ENCODE measurements at regions of chrX and their contacts with region 1.

Region 1: DNA sequence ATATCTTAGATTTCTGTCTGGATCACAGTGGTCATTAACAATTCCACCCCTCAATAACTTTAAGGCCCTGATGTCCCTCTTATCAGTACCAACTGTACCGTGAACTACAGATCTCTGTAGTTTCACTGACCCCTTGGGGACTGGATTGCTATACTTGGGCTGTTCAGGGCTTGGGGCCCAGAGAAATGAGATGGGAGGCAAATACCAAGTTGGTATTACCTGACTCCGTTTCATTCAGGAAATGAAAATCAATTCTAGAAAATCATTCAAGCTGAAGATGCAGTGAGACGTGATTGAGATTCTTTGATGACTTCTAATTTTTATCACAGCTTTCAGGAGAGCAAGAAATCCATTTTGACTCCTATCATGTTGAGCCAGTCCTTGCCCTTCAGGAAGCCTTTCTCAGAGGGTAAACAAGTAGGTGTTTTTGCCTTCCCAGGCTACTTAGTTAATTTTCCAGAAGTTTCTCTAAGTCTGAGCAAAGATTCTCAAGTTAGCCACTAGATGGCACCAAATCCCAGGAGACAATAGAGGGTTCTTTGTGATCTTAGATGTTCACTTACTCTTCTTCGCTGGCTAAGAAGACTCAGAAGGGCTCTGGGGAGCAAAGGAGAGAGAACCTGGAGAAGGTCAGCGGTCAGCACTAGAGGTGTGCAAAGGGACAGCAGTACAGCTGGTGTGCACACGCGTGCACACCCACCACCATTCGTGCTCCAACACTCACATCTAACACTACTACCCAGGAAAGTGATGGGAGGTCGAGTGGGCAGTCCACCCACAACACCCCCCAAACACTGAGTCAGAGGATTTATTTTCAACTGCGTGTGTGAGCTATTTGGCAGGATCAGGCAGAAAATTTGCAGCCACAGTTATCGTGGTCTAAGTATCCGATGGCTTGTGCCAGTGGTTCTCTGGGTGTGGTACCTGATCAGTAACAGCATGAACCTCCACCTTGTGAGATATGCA is 7.4 kb downstream of the HNRNPH2 start:
- DNase-seq: peak in 8 of 9 donors; percentile 23 to 70 (median 62)
- ATAC-seq: peak; percentile 83
- H3K4me3 ChIP-seq: no peak overlapping the region
- H3K4me3 Mint-ChIP-seq: peak overlapping the region; percentile 5 to 59 (median 41)
- H3K27ac ChIP-seq: peak overlapping the region; percentile 66
- H3K27ac Mint-ChIP-seq: peak overlapping the region; percentile 72 to 97 (median 88)
- H3K4me1 ChIP-seq: peaks cover 3 to 8% of the 10 kb centered on the region in 2 donors
- H3K4me1 Mint-ChIP-seq: peaks cover 16 to 59% (median 50%) of the 10 kb centered on the region in 7 donors
- H3K27me3 ChIP-seq: no peaks in the 10 kb centered on the region
- H3K27me3 Mint-ChIP-seq: no peaks in the 10 kb centered on the region

Region 2: DNA sequence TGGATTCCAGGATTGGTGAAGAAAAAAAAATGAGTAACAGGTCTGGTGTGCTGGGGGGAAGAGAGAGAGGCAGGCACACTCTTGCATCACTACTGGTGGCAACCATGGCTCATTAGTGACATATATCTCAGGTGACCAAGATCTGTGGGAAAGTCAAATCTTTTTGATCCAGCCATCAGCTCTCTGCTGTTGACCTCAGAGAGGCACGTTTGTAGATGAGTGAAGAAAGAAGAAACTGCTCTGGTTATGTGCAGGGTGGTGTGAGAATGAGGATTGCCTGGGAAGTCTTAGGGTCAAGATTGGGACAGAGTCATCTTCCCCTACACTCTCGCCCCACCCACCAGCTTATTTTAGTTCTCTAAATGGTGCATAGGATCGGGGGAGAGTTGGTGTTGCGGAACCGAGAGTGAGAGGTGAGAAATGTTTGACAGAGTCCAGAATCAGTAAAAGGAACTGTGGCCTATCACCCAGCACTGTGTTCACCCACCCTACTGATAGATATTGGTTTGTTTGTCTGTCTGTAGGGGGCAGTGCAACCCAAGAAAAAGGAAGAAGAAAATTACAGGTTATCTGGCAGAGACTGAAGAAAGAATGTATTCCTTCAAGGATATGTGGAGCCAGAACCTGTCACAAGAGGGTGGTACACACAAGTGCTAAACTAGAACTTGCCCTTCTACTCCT is 180.4 kb after region 1 on chrX:
- CTCF ChIA-PET with region 1: interaction called, 3 read pairs
- POLR2A ChIA-PET with region 1: no interaction called
- intact Hi-C with region 1: loop called (anchors 5 kb)
- DNase-seq: peak in 7 of 9 donors; percentile 32 to 70 (median 54)
- ATAC-seq: peak; percentile 86
- H3K4me3 ChIP-seq: no peak overlapping the region
- H3K4me3 Mint-ChIP-seq: no peak overlapping the region
- H3K27ac ChIP-seq: no peak overlapping the region
- H3K27ac Mint-ChIP-seq: no peak overlapping the region
- H3K4me1 ChIP-seq: no peaks in the 10 kb centered on the region
- H3K4me1 Mint-ChIP-seq: no peaks in the 10 kb centered on the region
- H3K27me3 ChIP-seq: no peaks in the 10 kb centered on the region
- H3K27me3 Mint-ChIP-seq: peaks cover 7 to 22% (median 12%) of the 10 kb centered on the region in 5 donors

Region 3: GRCh38 chrX:101759000-101759399 is 343.5 kb after region 1 on chrX:
- CTCF ChIA-PET with region 1: interaction called, 11 read pairs
- POLR2A ChIA-PET with region 1: no interaction called
- intact Hi-C with region 1: loop called (anchors 1 kb)
- DNase-seq: peak in 7 of 9 donors; percentile 8 to 43 (median 27)
- ATAC-seq: peak; percentile 78
- H3K4me3 ChIP-seq: no peak overlapping the region
- H3K4me3 Mint-ChIP-seq: no peak overlapping the region
- H3K27ac ChIP-seq: no peak overlapping the region
- H3K27ac Mint-ChIP-seq: no peak overlapping the region
- H3K4me1 ChIP-seq: no peaks in the 10 kb centered on the region
- H3K4me1 Mint-ChIP-seq: peaks cover 0 to 3% (median 0%) of the 10 kb centered on the region in 7 donors
- H3K27me3 ChIP-seq: no peaks in the 10 kb centered on the region
- H3K27me3 Mint-ChIP-seq: peaks cover 0 to 7% (median 5%) of the 10 kb centered on the region in 5 donors

Region 4: GRCh38 chrX:102085706-102086105 is 670.2 kb after region 1 on chrX:
- CTCF ChIA-PET with region 1: no interaction called
- POLR2A ChIA-PET with region 1: no interaction called
- intact Hi-C with region 1: loop called in 1 of 2 experiments (anchors 10 kb)
- DNase-seq: no peak
- ATAC-seq: no peak
- H3K4me3 ChIP-seq: no peak overlapping the region
- H3K4me3 Mint-ChIP-seq: no peak overlapping the region
- H3K27ac ChIP-seq: no peak overlapping the region
- H3K27ac Mint-ChIP-seq: no peak overlapping the region
- H3K4me1 ChIP-seq: no peaks in the 10 kb centered on the region
- H3K4me1 Mint-ChIP-seq: no peaks in the 10 kb centered on the region
- H3K27me3 ChIP-seq: no peaks in the 10 kb centered on the region
- H3K27me3 Mint-ChIP-seq: peaks cover 4 to 18% (median 6%) of the 10 kb centered on the region in 5 donors

Measured in naive thymus-derived CD4-positive, alpha-beta T cell (primary cell).